ENCODE measurements at regions of chr2 and their contacts with region 1.

Region 1: GRCh38 chr2:153478334-153479261 is at the start of gene RPRM:
- DNase-seq: peak; percentile 43
- H3K4me3 ChIP-seq: peak within 1 kb of the TSS in 2 of 3 experiments; percentile 40 to 44
- H3K27ac ChIP-seq: no peak within 1 kb of the TSS
- H3K4me1 ChIP-seq: peaks cover 6% of the 10 kb centered on the region
- H3K27me3 ChIP-seq: peaks cover 19% of the 10 kb centered on the region
- CTCF ChIP-seq: peak; percentile 76 to 77
- total RNA-seq, gene RPRM: 0.17 TPM in 1 of 2 donors, not detected in the other

Region 2: DNA sequence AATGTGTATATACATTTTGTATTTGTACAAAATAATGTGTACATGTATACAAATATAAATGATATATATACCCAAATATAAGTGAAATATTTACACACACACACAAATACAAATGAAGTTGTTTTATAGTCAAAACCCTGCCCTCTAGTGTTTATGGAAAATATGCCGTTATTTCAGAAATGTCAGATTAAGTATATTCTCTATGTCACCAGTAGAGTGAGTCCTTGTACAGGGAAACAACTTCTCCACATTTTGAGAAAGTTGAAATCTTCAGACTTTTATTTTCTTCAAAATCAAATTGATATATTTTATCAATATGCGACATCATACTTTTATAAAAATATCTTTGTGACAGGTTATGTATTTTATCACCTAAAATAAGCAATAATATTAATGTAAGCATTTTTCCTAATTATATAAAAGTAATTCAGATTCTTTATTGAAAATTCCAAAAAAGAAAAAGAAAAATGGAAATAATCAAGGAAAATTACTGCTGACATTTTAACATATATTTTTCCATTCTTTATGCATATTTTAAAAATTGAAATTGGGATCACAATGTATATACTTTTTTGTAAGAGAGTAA is 737.8 kb before region 1 on chr2:
- CTCF ChIA-PET with region 1: no interaction called
- dilution Hi-C with region 1: no loop called
- in situ Hi-C with region 1: no loop called
- intact Hi-C with region 1: loop called (anchors 5 kb)
- DNase-seq: peak; percentile 43
- H3K4me3 ChIP-seq: no peak overlapping the region
- H3K27ac ChIP-seq: no peak overlapping the region
- H3K4me1 ChIP-seq: no peaks in the 10 kb centered on the region
- H3K27me3 ChIP-seq: no peaks in the 10 kb centered on the region
- CTCF ChIP-seq: peak; percentile 82 to 90

Region 3: GRCh38 chr2:153163058-153163457 is 315.5 kb before region 1 on chr2:
- CTCF ChIA-PET with region 1: no interaction called
- dilution Hi-C with region 1: no loop called
- in situ Hi-C with region 1: loop called in 1 of 2 experiments (anchors 25 kb)
- intact Hi-C with region 1: loop called (anchors 1 kb)
- DNase-seq: peak; percentile 14
- H3K4me3 ChIP-seq: no peak overlapping the region
- H3K27ac ChIP-seq: no peak overlapping the region
- H3K4me1 ChIP-seq: no peaks in the 10 kb centered on the region
- H3K27me3 ChIP-seq: no peaks in the 10 kb centered on the region
- CTCF ChIP-seq: peak; percentile 53 to 70

Region 4: DNA sequence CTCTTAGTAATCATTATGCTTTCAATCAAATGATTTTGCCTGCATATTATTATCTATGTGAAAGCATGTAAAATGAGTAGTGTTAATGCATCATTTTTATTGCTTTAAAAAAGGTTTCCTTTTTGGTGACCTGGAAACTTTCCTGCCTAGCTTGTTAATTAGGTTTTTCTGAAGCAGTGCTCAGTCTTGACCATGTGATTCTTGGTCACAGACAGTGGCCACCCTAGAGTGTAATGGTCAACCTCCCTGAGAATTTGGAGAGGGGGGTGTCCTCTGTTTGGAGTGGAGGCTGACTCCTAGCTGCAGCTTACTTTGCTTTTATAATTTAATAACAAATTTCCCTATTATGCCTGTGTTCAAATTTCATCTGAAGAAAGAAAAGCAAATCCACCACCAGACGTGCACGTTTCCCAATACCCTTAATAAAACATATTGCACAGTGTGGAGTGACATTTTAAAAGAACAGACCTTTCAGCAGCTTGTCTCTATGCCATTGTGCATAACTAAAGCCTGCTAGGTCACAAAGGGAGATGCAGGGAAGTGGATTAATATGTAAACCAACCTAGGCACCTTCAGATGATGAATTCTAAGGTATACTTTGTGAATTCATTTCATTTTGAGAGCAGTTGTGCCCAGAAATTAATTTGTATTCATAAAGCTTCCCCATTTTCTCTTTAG is 130.6 kb before region 1 on chr2:
- CTCF ChIA-PET with region 1: no interaction called
- dilution Hi-C with region 1: no loop called
- in situ Hi-C with region 1: loop called in 1 of 2 experiments (anchors 25 kb)
- intact Hi-C with region 1: loop called (anchors 1 kb)
- DNase-seq: no peak
- H3K4me3 ChIP-seq: no peak overlapping the region
- H3K27ac ChIP-seq: no peak overlapping the region
- H3K4me1 ChIP-seq: no peaks in the 10 kb centered on the region
- H3K27me3 ChIP-seq: peaks cover 4% of the 10 kb centered on the region
- CTCF ChIP-seq: no peak

Region 5: DNA sequence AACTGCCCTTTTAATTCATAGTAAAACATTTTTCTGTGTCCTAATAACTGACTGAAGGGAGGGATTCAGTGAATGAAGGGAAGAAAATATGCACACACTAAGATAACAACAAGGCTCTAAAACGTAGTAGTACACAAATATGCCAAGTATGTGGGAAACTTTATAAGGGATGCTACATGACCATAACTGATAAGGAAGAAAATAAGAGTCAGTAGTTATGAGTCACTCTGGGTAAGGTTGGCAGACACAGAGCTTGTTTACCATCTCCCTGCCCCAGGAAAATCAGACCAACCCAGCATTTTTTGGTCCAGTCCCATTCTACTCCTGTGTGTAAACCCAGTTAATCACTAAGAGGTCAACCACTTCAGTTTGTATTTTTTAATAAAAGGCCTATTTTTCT is 124.2 kb before region 1 on chr2:
- CTCF ChIA-PET with region 1: no interaction called
- dilution Hi-C with region 1: no loop called
- in situ Hi-C with region 1: loop called in 1 of 2 experiments (anchors 25 kb)
- intact Hi-C with region 1: no loop called
- DNase-seq: peak; percentile 9
- H3K4me3 ChIP-seq: no peak overlapping the region
- H3K27ac ChIP-seq: no peak overlapping the region
- H3K4me1 ChIP-seq: no peaks in the 10 kb centered on the region
- H3K27me3 ChIP-seq: no peaks in the 10 kb centered on the region
- CTCF ChIP-seq: no peak

Region 6: DNA sequence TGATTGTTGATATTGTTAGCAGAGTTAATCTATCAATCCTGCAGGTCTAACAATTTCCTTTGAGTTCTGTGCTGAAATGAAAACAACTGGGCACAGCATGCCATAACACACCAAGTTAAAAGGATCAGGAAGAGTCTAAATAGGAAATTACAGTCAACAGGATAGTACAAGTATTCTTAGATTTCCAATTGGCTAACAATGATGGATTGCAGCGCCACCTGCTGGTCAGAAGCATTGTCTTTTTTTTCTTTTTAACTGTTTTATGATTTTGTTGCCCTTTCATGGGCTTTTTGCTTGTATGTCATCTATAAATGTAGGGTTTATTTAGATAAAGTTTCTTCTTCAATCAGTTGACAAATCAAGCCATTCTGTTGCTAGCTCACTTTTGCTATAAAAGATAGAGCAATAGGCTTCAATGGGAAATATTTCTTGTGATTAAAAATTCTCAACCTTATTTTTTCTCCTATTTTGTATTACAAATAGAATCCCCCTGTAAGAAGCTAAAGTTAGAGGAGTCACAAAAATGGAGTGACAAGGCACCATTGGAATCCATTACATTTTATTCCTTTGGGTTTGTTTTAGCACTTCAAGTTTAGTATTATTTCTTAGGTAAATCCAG is 40.8 kb after region 1 on chr2:
- CTCF ChIA-PET with region 1: no interaction called
- dilution Hi-C with region 1: no loop called
- in situ Hi-C with region 1: no loop called
- intact Hi-C with region 1: no loop called
- DNase-seq: peak; percentile 36
- H3K4me3 ChIP-seq: no peak overlapping the region
- H3K27ac ChIP-seq: no peak overlapping the region
- H3K4me1 ChIP-seq: no peaks in the 10 kb centered on the region
- H3K27me3 ChIP-seq: no peaks in the 10 kb centered on the region
- CTCF ChIP-seq: peak; percentile 67 to 70

Measured in mammary epithelial cell (primary cell).